ENCODE measurements at regions of chr1 and their contacts with region 1.

Region 1: GRCh38 chr1:54738244-54738643 is 22.6 kb downstream of the TTC4 start:
- DNase-seq: no peak
- ATAC-seq: no peak

Region 2: DNA sequence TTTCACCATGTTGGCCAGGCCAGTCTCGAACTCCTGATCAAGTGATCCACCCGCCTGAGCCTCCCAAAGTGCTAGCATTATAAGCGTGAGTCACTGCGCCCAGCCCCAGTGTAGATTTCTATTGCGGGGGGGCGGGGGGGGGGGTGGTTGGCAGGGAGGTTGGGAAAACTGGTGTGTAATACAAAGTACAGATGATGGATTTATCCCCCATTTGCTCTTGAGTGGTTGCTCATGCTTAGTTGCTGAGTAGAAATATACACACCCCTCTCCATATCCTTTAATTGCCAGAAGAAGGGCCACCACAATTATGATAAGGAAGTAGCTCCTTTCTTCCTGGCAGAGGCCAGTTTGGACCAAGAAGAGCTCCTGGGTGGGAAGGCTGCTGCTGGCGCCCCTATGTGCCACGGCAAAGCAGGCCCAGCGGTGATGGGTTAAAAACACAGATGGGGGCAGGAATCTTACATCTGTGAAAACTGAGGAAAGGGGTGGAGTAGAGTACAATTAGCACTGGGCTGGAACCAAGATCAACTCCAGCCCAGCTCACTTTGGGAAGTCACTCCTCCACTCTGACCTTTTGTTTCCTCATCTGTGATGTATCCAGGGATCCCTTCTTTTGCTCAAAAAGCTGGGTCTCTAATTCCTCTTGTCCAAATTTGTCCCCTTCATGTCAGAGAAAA is 483.1 kb before region 1 on chr1:
- intact Hi-C with region 1: no loop called
- DNase-seq: no peak
- ATAC-seq: no peak

Region 3: DNA sequence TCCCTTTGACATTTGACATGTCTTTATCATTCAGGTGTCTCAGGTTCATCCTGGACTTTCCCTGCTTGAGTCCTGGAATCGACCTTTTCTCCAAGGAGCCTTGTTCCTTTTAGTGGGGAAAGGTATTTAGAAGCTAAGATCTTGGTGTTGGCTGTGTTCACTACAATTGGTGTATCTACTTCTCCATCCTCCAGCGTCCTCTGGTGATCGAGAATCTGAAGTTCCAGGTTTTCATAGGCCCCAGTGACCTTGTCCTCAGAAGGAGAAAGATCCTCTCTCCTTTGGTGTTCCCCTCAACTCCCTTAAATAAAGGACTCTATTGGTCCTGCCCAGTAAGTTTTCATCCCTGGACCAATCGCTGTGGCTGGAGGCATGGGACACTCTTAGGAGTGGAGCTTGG is 74.5 kb before region 1 on chr1:
- intact Hi-C with region 1: loop called (anchors 2 kb)
- DNase-seq: no peak
- ATAC-seq: no peak